Heart right ventricle (tissue), 16 donors: ENCODE measurements at regions of chr11 and their contacts with region 1.

Region 1: DNA sequence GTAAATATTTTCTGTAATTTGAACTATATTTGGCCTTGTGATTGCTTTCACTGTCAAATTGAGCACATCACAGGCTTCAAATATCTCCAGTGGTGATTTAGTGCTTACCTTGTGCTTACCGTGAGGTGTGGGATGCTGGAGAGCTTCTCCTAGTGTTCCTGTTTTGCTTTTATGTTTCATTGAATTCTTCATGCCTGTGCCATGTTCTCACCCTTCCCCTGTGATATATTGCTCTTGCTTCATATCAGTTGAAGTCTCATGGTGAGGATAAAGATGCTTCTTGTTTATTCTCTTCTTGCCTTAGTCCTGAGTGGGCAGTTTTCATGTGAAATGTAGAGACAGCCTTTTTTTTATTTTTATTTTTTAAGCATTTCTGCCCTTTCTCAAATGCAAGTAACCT is 198.0 kb upstream of the PDGFD start:
- DNase-seq: no peak
- ATAC-seq: no peak
- H3K4me3 ChIP-seq: no peak overlapping the region
- H3K27ac ChIP-seq: no peak overlapping the region
- H3K4me1 ChIP-seq: no peaks in the 10 kb centered on the region
- H3K27me3 ChIP-seq: no peaks in the 10 kb centered on the region
- CTCF ChIP-seq: no peak

Region 2: DNA sequence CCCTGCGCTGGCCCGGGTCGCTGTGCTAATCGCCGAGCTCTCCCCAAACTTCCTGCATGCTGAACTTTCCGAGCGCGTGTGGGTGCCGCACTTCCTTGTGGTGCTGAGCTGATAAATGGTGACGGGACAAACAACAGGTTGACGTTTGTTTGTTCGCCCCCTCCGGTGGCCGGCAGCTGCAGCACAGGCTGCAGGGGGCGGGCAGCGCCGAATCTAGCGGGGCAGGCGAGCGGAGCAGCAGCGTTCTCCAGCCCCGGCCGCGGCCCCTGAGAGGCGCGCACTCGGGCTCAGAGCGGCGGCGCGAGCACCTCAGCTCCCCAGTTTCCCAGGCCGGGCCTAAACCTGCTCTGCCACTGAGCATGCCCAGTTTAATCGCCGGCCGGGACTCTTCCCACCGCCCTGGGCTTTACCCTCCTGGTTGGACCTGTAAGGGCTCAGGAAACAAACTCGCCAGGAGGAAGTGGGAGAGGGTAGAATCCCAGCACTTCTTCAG is 197.9 kb before region 1 on chr11 and contains the start of gene PDGFD:
- intact Hi-C with region 1: no loop called
- DNase-seq: peak; percentile 65
- ATAC-seq: peak; percentile 87 to 97 (median 92)
- H3K4me3 ChIP-seq: peak within 1 kb of the TSS; percentile 37 to 72 (median 66)
- H3K27ac ChIP-seq: peak within 1 kb of the TSS in 9 of 10 donors; percentile 33 to 71 (median 62)
- H3K4me1 ChIP-seq: peaks cover 0 to 17% (median 7%) of the 10 kb centered on the region in 9 donors
- H3K27me3 ChIP-seq: peaks cover 0 to 14% (median 0%) of the 10 kb centered on the region in 7 donors
- CTCF ChIP-seq: peak in 8 of 9 donors; percentile 29 to 67 (median 54)
- total RNA-seq, gene PDGFD: 7.3 to 17.5 (median 11.3) TPM

Region 3: GRCh38 chr11:104410336-104410735 is 48.4 kb after region 1 on chr11:
- intact Hi-C with region 1: no loop called
- DNase-seq: no peak
- ATAC-seq: no peak
- H3K4me3 ChIP-seq: no peak overlapping the region
- H3K27ac ChIP-seq: no peak overlapping the region
- H3K4me1 ChIP-seq: no peaks in the 10 kb centered on the region
- H3K27me3 ChIP-seq: no peaks in the 10 kb centered on the region
- CTCF ChIP-seq: no peak

Region 4: GRCh38 chr11:104764710-104765045 is 402.7 kb after region 1 on chr11:
- intact Hi-C with region 1: loop called in 1 of 10 experiments (anchors 5 kb)
- DNase-seq: no peak
- ATAC-seq: no peak
- H3K4me3 ChIP-seq: no peak overlapping the region
- H3K27ac ChIP-seq: no peak overlapping the region
- H3K4me1 ChIP-seq: peaks cover 0 to 5% (median 0%) of the 10 kb centered on the region in 9 donors
- H3K27me3 ChIP-seq: no peaks in the 10 kb centered on the region
- CTCF ChIP-seq: no peak